ENCODE measurements at regions of chr21 and their contacts with region 1.

Region 1: DNA sequence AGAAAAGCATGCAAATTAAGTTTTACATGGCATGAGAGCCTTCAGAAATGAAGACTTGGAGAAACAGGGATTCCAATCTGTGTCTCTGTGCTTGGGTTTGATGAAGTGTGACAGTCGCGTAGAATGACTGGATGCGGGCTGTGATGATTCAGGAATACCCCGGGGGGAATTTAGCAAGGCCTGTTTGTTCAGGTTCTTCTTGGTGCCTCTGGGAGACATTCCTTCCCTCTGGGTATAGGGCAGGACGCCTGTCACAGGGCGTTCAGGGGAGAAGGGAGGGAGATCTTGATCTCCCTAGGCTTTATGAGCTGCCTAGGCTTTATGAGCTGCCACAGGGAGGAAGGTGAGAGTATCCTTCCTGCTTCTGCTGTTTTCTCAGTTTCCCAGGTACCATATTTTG is 36.6 kb downstream of the DOP1B start:
- DNase-seq: no peak
- H3K4me3 ChIP-seq: no peak overlapping the region
- CTCF ChIP-seq: no peak

Region 2: GRCh38 chr21:36069713-36070573 is 123.3 kb before region 1 on chr21 and contains the start of gene CBR1:
- in situ Hi-C with region 1: no loop called
- DNase-seq: peak; percentile 95
- H3K4me3 ChIP-seq: peak within 1 kb of the TSS; percentile 76
- CTCF ChIP-seq: no peak

Region 3: GRCh38 chr21:36260030-36260787 is 67.0 kb after region 1 on chr21:
- in situ Hi-C with region 1: loop called (anchors 10 kb)
- DNase-seq: peak; percentile 84
- H3K4me3 ChIP-seq: peak overlapping the region; percentile 32
- CTCF ChIP-seq: peak; percentile 76